ENCODE measurements at regions of chr17 and their contacts with region 1.

Region 1: GRCh38 chr17:34420254-34420766 is 57.3 kb upstream of the CCL1 start:
- DNase-seq: peak; percentile 45 to 78
- ATAC-seq: peak; percentile 64 to 75 (median 75)
- H3K4me3 ChIP-seq: no peak overlapping the region
- H3K4me3 Mint-ChIP-seq: no peak overlapping the region
- H3K27ac ChIP-seq: no peak overlapping the region
- H3K27ac Mint-ChIP-seq: no peak overlapping the region
- H3K4me1 ChIP-seq: peaks cover 6% of the 10 kb centered on the region
- H3K4me1 Mint-ChIP-seq: peaks cover 0 to 5% of the 10 kb centered on the region in 2 donors
- H3K27me3 ChIP-seq: no peaks in the 10 kb centered on the region
- H3K27me3 Mint-ChIP-seq: peaks cover 26 to 42% of the 10 kb centered on the region in 2 donors
- CTCF ChIP-seq: peak; percentile 94

Region 2: DNA sequence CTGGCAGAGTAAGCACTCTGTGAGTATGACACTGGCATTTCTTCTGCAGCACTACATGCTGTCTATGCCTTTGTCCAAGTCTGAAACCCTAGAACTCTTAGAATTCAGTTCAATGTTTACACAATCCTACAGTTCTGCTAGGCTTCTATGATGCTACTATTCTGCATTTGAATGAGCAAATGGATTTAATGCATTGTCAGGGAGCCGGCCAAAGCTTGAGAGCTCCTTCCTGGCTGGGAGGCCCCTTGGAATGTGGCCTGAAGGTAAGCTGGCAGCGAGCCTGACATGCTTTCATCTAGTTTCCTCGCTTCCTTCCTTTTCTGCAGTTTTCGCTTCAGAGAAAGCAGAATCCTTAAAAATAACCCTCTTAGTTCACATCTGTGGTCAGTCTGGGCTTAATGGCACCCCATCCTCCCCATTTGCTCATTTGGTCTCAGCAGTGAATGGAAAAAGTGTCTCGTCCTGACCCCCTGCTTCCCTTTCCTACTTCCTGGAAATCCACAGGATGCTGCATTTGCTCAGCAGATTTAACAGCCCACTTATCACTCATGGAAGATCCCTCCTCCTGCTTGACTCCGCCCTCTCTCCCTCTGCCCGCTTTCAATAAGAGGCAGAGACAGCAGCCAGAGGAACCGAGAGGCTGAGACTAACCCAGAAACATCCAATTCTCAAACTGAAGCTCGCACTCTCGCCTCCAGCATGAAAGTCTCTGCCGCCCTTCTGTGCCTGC is 165.5 kb before region 1 on chr17 and contains the start of gene CCL2:
- intact Hi-C with region 1: no loop called
- DNase-seq: no peak
- ATAC-seq: no peak
- H3K4me3 ChIP-seq: no peak within 1 kb of the TSS
- H3K4me3 Mint-ChIP-seq: no peak within 1 kb of the TSS
- H3K27ac ChIP-seq: no peak within 1 kb of the TSS
- H3K27ac Mint-ChIP-seq: no peak within 1 kb of the TSS
- H3K4me1 ChIP-seq: peaks cover 8% of the 10 kb centered on the region
- H3K4me1 Mint-ChIP-seq: peaks cover 6 to 7% of the 10 kb centered on the region in 2 donors
- H3K27me3 ChIP-seq: no peaks in the 10 kb centered on the region
- H3K27me3 Mint-ChIP-seq: peaks cover 33 to 51% of the 10 kb centered on the region in 2 donors
- CTCF ChIP-seq: no peak
- total RNA-seq, gene CCL2: not detected

Region 3: DNA sequence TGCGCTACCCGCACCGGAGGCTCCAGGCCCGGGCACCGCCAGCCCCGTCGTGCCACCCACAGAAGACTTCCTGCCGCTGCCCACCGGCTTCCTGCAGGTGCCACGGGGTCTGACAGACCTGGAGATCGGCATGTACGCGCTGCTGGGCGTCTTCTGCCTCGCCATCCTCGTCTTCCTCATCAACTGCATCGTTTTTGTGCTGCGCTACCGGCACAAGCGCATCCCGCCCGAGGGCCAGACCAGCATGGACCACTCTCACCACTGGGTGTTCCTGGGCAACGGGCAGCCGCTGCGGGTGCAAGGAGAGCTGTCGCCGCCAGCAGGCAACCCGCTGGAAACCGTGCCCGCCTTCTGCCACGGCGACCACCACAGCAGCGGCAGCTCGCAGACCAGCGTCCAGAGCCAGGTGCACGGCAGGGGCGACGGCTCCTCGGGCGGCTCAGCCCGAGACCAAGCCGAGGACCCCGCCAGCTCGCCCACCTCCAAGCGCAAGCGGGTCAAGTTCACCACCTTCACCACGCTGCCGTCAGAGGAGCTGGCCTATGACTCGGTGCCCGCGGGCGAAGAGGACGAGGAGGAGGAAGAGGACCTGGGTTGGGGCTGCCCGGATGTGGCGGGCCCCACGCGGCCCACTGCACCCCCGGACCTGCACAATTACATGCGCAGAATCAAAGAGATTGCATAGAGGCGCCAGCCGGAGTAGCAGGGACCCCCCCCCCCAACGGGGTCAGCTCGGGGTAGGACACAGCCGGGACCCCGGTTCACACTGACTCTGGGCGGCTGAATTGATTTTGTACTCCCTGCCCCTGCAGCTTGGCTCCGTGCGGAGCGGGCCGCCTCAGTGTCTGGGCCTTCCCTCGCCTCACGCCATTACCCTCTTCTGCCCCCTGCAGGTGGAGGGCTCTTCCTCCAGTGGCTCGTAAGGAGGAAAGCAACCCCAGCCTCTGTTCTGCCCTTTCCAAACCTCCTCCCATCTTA is 217.5 kb after region 1 on chr17:
- intact Hi-C with region 1: loop called (anchors 1 kb)
- DNase-seq: peak; percentile 71 to 92
- ATAC-seq: peak; percentile 93 to 97 (median 96)
- H3K4me3 ChIP-seq: peak overlapping the region; percentile 71
- H3K4me3 Mint-ChIP-seq: peak overlapping the region; percentile 86
- H3K27ac ChIP-seq: no peak overlapping the region
- H3K27ac Mint-ChIP-seq: peak overlapping the region in 1 of 2 donors; percentile 40
- H3K4me1 ChIP-seq: peaks cover 22% of the 10 kb centered on the region
- H3K4me1 Mint-ChIP-seq: peaks cover 0 to 21% of the 10 kb centered on the region in 2 donors
- H3K27me3 ChIP-seq: peaks cover 2% of the 10 kb centered on the region
- H3K27me3 Mint-ChIP-seq: peaks cover 25 to 41% of the 10 kb centered on the region in 2 donors
- CTCF ChIP-seq: peak; percentile 87

Measured in natural killer cell (primary cell).